Gastrocnemius medialis (tissue), 4 donors: ENCODE measurements at regions of chr18 and their contacts with region 1.

Region 1: GRCh38 chr18:48675352-48675761 is 136.5 kb downstream of the CTIF start:
- DNase-seq: peak; percentile 72 to 85
- ATAC-seq: peak; percentile 76 to 81
- H3K4me3 ChIP-seq: no peak overlapping the region
- H3K27ac ChIP-seq: peak overlapping the region in 1 of 4 donors; percentile 1
- H3K4me1 ChIP-seq: peaks cover 18 to 28% of the 10 kb centered on the region in 2 donors
- H3K27me3 ChIP-seq: no peaks in the 10 kb centered on the region
- CTCF ChIP-seq: peak; percentile 92 to 97 (median 94)
- POLR2A ChIP-seq: no peak

Region 2: GRCh38 chr18:48820483-48821250 is 145.3 kb after region 1 on chr18:
- in situ Hi-C with region 1: no loop called
- intact Hi-C with region 1: no loop called
- DNase-seq: peak; percentile 1 to 5
- ATAC-seq: no peak
- H3K4me3 ChIP-seq: no peak overlapping the region
- H3K27ac ChIP-seq: no peak overlapping the region
- H3K4me1 ChIP-seq: peaks cover 3 to 4% of the 10 kb centered on the region in 2 donors
- H3K27me3 ChIP-seq: no peaks in the 10 kb centered on the region
- CTCF ChIP-seq: no peak
- POLR2A ChIP-seq: no peak

Region 3: GRCh38 chr18:48928787-48929186 is 253.4 kb after region 1 on chr18:
- in situ Hi-C with region 1: loop called in 1 of 4 experiments (anchors 25 kb)
- intact Hi-C with region 1: loop called (anchors 5 kb)
- DNase-seq: no peak
- ATAC-seq: no peak
- H3K4me3 ChIP-seq: no peak overlapping the region
- H3K27ac ChIP-seq: peak overlapping the region in 2 of 4 donors; percentile 0 to 36
- H3K4me1 ChIP-seq: peaks cover 73 to 97% of the 10 kb centered on the region in 2 donors
- H3K27me3 ChIP-seq: no peaks in the 10 kb centered on the region
- CTCF ChIP-seq: no peak
- POLR2A ChIP-seq: no peak

Region 4: GRCh38 chr18:48951448-48952286 is 276.3 kb after region 1 on chr18:
- in situ Hi-C with region 1: loop called in 2 of 4 experiments (anchors 25 kb)
- intact Hi-C with region 1: loop called (anchors 10 kb)
- DNase-seq: peak; percentile 80 to 90
- ATAC-seq: peak; percentile 55 to 60
- H3K4me3 ChIP-seq: peak overlapping the region; percentile 71 to 89 (median 82)
- H3K27ac ChIP-seq: peak overlapping the region; percentile 93 to 100 (median 94)
- H3K4me1 ChIP-seq: peaks cover 44 to 51% of the 10 kb centered on the region in 2 donors
- H3K27me3 ChIP-seq: no peaks in the 10 kb centered on the region
- CTCF ChIP-seq: peak in 3 of 5 experiments; percentile 33 to 37 (median 37)
- POLR2A ChIP-seq: peak; percentile 91 to 93

Region 5: GRCh38 chr18:49178736-49179135 is 503.4 kb after region 1 on chr18:
- in situ Hi-C with region 1: loop called in 3 of 4 experiments (anchors 10 kb)
- intact Hi-C with region 1: loop called (anchors 5 kb)
- DNase-seq: no peak
- ATAC-seq: no peak
- H3K4me3 ChIP-seq: no peak overlapping the region
- H3K27ac ChIP-seq: no peak overlapping the region
- H3K4me1 ChIP-seq: no peaks in the 10 kb centered on the region
- H3K27me3 ChIP-seq: no peaks in the 10 kb centered on the region
- CTCF ChIP-seq: peak in 4 of 5 experiments; percentile 23 to 49 (median 40)
- POLR2A ChIP-seq: no peak

Region 6: GRCh38 chr18:49238433-49239042 is 563.2 kb after region 1 on chr18:
- in situ Hi-C with region 1: loop called in 1 of 4 experiments (anchors 25 kb)
- intact Hi-C with region 1: no loop called
- DNase-seq: no peak
- ATAC-seq: no peak
- H3K4me3 ChIP-seq: no peak overlapping the region
- H3K27ac ChIP-seq: no peak overlapping the region
- H3K4me1 ChIP-seq: no peaks in the 10 kb centered on the region
- H3K27me3 ChIP-seq: no peaks in the 10 kb centered on the region
- CTCF ChIP-seq: peak in 2 of 5 experiments; percentile 10 to 36
- POLR2A ChIP-seq: no peak

Region 7: DNA sequence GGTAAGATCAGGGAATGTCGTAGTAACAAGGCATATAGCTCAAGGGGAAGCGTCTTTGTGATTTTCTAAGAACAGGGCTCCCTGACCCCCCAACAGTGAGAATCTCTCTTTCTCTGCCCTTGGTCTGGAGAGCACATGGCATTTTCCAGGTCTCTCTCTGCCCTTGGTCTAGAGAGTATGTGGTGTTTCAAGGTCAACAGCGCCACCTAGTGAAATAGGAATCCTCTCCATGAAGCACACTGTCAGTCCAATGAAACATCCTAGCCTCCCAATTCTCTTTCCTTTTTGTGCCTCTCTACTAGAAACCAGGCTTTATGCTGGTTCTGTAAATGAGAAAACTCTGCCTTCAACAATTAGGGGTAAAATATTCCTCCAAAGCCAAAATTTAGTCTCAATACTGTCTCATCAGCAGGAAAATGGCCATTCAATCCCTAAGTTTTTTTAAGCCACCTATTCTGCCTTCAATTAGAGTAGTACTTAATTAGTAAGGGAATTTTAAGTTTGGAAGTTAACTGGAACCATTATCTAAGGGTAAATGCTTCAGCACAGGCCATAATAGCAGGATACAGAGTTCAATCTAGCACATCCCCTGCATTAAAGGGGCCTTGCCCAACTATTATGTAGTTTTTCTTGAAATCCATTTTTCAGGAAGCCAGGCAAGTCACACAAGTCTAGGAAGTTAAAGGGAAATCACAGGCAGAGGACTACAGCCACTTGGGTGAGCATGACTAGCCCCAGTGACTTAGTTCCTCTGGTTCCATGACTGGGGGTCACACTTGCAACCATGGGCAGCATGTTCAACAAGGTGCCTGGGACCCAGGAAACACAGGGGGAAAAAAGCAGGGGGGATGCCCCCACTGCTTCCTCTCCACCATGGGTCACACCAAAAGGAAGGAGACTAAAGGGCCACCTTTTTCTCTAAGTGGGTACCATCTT is 772.7 kb after region 1 on chr18:
- in situ Hi-C with region 1: loop called in 3 of 4 experiments (anchors 25 kb)
- intact Hi-C with region 1: loop called (anchors 5 kb)
- DNase-seq: peak in 1 of 2 donors; percentile 31
- ATAC-seq: peak; percentile 84 to 96
- H3K4me3 ChIP-seq: no peak overlapping the region
- H3K27ac ChIP-seq: no peak overlapping the region
- H3K4me1 ChIP-seq: peaks cover 0 to 12% of the 10 kb centered on the region in 2 donors
- H3K27me3 ChIP-seq: no peaks in the 10 kb centered on the region
- CTCF ChIP-seq: peak; percentile 28 to 61 (median 50)
- POLR2A ChIP-seq: no peak

Region 8: DNA sequence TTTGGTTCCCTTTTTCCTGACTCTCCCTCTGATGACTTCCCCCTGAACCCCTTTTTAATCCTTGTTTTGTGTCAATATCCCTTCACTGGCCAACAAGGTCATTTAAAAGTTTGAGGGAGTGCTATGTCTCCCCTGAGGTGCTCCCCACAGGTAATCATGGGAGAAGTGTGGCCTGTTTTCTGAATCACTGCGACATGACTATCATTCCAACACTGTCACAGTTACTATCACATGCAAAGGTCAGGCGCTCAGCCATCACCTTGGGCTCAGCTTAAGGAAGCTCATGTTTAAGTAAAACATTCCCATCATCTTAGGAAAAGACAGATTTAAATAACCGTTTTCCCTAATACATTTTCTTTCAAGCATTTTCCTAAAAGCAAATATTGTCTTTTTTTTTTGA is 1158.9 kb after region 1 on chr18:
- in situ Hi-C with region 1: no loop called
- intact Hi-C with region 1: no loop called
- DNase-seq: no peak
- ATAC-seq: no peak
- H3K4me3 ChIP-seq: no peak overlapping the region
- H3K27ac ChIP-seq: no peak overlapping the region
- H3K4me1 ChIP-seq: no peaks in the 10 kb centered on the region
- H3K27me3 ChIP-seq: no peaks in the 10 kb centered on the region
- CTCF ChIP-seq: no peak
- POLR2A ChIP-seq: no peak